Psoas muscle (tissue), 8 donors: ENCODE measurements at regions of chr4 and their contacts with region 1.

Region 1: DNA sequence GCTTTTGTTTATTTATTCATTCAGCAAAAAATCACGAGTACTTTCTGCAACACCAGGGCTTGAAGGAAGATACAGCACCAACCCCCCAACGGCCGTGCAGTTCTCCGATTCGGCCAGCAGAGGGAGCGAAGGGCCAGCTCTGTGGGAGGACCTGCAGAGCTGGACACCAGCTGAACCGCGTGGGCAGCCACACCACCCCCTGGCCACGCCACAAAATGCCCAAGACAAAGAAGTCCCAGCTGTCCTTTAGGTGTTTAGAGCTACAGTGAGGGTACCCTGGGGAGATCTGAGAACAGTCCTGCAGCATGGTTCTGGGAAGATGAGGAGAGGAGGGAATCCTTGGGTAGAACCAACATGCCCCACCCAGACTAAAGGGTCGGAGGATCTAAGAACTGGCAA is 83.1 kb downstream of the RELL1 start:
- DNase-seq: peak; percentile 82 to 92
- ATAC-seq: peak; percentile 95 to 99 (median 97)
- H3K4me3 ChIP-seq: no peak overlapping the region
- H3K27ac ChIP-seq: no peak overlapping the region
- H3K4me1 ChIP-seq: no peaks in the 10 kb centered on the region
- H3K27me3 ChIP-seq: no peaks in the 10 kb centered on the region
- CTCF ChIP-seq: peak; percentile 99

Region 2: GRCh38 chr4:37686373-37687193 is 83.5 kb after region 1 on chr4 and contains the start of gene RELL1:
- intact Hi-C with region 1: loop called in 1 of 2 experiments (anchors 1 kb)
- DNase-seq: peak; percentile 99 to 100
- ATAC-seq: peak; percentile 93 to 97 (median 94)
- H3K4me3 ChIP-seq: peak within 1 kb of the TSS; percentile 98
- H3K27ac ChIP-seq: peak within 1 kb of the TSS; percentile 99
- H3K4me1 ChIP-seq: peaks cover 31% of the 10 kb centered on the region
- H3K27me3 ChIP-seq: no peaks in the 10 kb centered on the region
- CTCF ChIP-seq: no peak
- total RNA-seq, gene RELL1: 21.0 to 35.7 (median 25.1) TPM

Region 3: GRCh38 chr4:37793562-37793961 is 190.5 kb after region 1 on chr4:
- intact Hi-C with region 1: loop called (anchors 2 to 5 kb)
- DNase-seq: no peak
- ATAC-seq: peak; percentile 62 to 82 (median 75)
- H3K4me3 ChIP-seq: no peak overlapping the region
- H3K27ac ChIP-seq: no peak overlapping the region
- H3K4me1 ChIP-seq: peaks cover 6% of the 10 kb centered on the region
- H3K27me3 ChIP-seq: no peaks in the 10 kb centered on the region
- CTCF ChIP-seq: peak; percentile 57

Region 4: GRCh38 chr4:37977471-37978247 is 374.6 kb after region 1 on chr4:
- intact Hi-C with region 1: loop called in 1 of 2 experiments (anchors 10 kb)
- DNase-seq: peak; percentile 72 to 89
- ATAC-seq: peak; percentile 82 to 93 (median 92)
- H3K4me3 ChIP-seq: peak overlapping the region; percentile 91
- H3K27ac ChIP-seq: peak overlapping the region; percentile 87
- H3K4me1 ChIP-seq: peaks cover 7% of the 10 kb centered on the region
- H3K27me3 ChIP-seq: no peaks in the 10 kb centered on the region
- CTCF ChIP-seq: peak; percentile 70

Region 5: DNA sequence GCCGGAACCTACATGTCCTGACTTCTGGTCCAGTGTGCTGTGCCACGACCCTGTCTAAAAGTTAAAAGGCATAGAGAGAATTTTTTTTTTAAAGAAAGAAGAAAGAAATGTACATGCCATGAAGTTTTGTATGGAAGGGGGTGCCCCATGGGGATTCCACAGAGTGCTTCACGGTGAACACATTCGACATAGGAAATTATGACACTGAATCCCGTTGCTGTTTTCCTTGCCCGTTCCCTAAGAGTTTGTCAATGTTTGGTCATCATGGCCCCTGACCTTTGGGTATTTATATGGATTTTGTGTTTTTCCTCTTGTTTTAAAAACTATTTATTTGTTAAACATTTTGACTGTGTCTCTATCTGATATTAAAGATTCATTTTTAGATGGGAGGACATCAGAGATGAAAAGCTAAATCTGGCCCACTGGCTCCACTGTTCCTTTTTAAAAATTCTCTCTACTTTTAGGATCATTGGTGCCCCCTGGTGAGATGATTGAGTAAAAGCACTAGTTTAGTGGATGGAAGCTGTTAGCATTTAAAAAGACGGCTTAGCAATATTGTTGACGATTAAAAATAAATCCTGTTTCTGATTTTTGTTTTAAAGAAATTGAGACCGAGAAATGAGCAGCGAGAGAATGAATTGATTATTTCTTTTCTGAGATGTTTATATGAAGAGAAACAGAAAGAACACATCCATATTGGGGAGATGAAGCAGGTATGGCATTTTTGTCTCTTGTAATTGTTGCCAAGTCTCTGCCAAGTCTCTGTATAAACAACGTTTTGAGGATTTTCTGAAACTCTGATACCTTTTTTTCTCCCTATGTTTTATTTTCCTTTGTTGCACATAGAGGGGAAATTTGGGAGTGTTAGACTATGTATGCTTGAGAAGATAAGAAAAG is 432.2 kb after region 1 on chr4:
- intact Hi-C with region 1: loop called (anchors 5 kb)
- DNase-seq: no peak
- ATAC-seq: peak in 2 of 4 donors; percentile 59 to 82
- H3K4me3 ChIP-seq: no peak overlapping the region
- H3K27ac ChIP-seq: no peak overlapping the region
- H3K4me1 ChIP-seq: no peaks in the 10 kb centered on the region
- H3K27me3 ChIP-seq: no peaks in the 10 kb centered on the region
- CTCF ChIP-seq: peak; percentile 67